OCI-LY7 (cell line): ENCODE measurements at regions of chr18 and their contacts with region 1.

Region 1: DNA sequence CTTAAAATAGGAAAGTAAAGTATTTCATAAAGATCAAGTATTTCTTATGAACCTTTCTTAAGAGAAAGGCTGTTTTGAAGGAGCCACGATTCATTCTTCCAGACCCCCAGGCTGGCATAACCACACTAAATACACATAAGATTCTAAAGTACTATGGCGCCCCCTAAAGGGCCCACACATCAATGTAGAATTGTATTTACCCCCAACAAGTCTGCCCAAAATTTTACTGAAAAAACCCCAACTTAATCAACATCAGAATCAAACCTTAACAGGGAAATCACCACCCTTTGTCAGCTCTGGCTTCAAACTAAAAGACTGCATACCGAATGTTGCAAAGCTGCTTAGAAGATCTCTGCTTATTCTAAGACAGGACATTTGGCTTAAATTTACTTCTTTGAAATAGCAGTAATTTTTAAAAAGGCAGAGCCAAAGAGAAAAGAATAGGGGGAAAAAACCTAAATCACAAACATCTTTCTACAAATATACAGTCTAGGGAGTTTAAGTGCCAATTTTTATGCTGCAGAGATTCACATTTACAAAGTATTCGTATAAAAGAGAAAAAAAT is 20.4 kb upstream of the BCL2 start:
- DNase-seq: peak; percentile 45
- H3K4me3 ChIP-seq: no peak overlapping the region
- H3K27ac ChIP-seq: no peak overlapping the region
- H3K4me1 ChIP-seq: no peaks in the 10 kb centered on the region
- CTCF ChIP-seq: peak; percentile 78

Region 2: GRCh38 chr18:63016270-63016669 is 323.7 kb before region 1 on chr18:
- CTCF ChIA-PET with region 1: no interaction called
- POLR2A ChIA-PET with region 1: no interaction called
- intact Hi-C with region 1: loop called (anchors 5 kb)
- DNase-seq: peak; percentile 39
- H3K4me3 ChIP-seq: no peak overlapping the region
- H3K27ac ChIP-seq: no peak overlapping the region
- H3K4me1 ChIP-seq: no peaks in the 10 kb centered on the region
- CTCF ChIP-seq: peak; percentile 76

Region 3: GRCh38 chr18:63439334-63439733 is 99.3 kb after region 1 on chr18:
- CTCF ChIA-PET with region 1: interaction called, 5 read pairs
- POLR2A ChIA-PET with region 1: interaction called, 4 read pairs
- intact Hi-C with region 1: loop called (anchors 1 kb)
- DNase-seq: peak; percentile 45
- H3K4me3 ChIP-seq: no peak overlapping the region
- H3K27ac ChIP-seq: no peak overlapping the region
- H3K4me1 ChIP-seq: no peaks in the 10 kb centered on the region
- CTCF ChIP-seq: peak; percentile 81